ENCODE measurements at regions of chr4 and their contacts with region 1.

Region 1: DNA sequence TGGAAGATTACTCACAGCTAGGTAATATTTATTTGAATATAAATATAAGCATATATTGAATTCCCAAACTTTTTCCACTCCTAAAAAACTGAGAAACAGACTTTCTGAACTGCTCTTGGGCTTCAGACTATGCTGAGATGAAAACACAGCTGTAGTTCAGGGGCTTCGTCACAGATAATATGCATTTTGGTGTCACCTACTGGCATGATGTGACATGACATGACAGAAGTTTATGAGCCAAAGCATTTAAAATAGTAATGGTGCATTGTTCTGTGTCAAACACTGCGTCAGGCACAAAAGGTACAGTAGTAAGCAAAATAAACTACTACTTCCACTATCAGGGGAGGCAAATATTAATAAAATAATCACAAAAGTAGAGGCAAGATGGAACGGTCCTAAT is 171.3 kb downstream of the BTC start:
- DNase-seq: peak; percentile 79
- H3K4me3 ChIP-seq: no peak overlapping the region
- H3K27ac ChIP-seq: peak overlapping the region; percentile 98
- H3K4me1 ChIP-seq: peaks cover 87% of the 10 kb centered on the region
- H3K27me3 ChIP-seq: no peaks in the 10 kb centered on the region
- CTCF ChIP-seq: peak; percentile 39 to 46
- POLR2A ChIP-seq: no peak

Region 2: GRCh38 chr4:73740353-73740778 is 882.7 kb before region 1 on chr4 and contains the start of gene CXCL8:
- CTCF ChIA-PET with region 1: no interaction called
- POLR2A ChIA-PET with region 1: no interaction called
- dilution Hi-C with region 1: no loop called
- intact Hi-C with region 1: loop called (anchors 5 kb)
- DNase-seq: peak; percentile 94
- H3K4me3 ChIP-seq: peak within 1 kb of the TSS in 2 of 3 experiments; percentile 20 to 62
- H3K27ac ChIP-seq: peak within 1 kb of the TSS; percentile 75
- H3K4me1 ChIP-seq: peaks cover 28% of the 10 kb centered on the region
- H3K27me3 ChIP-seq: no peaks in the 10 kb centered on the region
- CTCF ChIP-seq: no peak
- POLR2A ChIP-seq: peak; percentile 73
- total RNA-seq, gene CXCL8: 5.2 and 12.6 TPM in 2 replicates

Region 3: DNA sequence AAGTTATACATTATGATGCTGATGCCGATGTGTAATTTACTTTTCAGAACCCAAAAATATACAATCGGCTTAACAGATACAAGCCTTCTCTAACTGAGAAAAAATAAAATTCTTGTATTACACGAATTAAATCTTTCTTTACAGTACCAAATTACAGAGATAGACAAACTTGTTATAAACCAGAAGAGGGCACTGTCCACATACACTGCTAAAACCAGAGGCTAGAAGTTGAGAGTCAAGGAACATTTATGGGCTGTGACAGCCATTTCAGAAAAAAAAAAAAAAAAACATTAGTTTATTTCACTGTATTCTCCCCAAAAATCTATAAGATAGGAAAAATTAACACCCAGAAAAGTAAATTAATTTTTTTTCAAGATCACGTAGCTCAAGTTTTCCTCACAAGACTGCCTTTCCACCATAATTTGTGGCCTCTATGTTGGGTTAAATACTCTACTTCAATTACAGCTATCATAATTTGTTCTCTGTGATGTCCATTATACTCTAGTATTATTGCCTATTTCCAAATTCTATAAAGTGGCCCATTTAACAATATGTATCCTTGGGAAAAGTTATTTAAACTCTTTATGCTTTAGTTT is 246.1 kb before region 1 on chr4:
- CTCF ChIA-PET with region 1: interaction called, 25 read pairs
- POLR2A ChIA-PET with region 1: no interaction called
- dilution Hi-C with region 1: no loop called
- intact Hi-C with region 1: loop called (anchors 1 kb)
- DNase-seq: peak; percentile 67
- H3K4me3 ChIP-seq: no peak overlapping the region
- H3K27ac ChIP-seq: no peak overlapping the region
- H3K4me1 ChIP-seq: peaks cover 7% of the 10 kb centered on the region
- H3K27me3 ChIP-seq: no peaks in the 10 kb centered on the region
- CTCF ChIP-seq: peak; percentile 31
- POLR2A ChIP-seq: no peak

Region 4: GRCh38 chr4:74451200-74451661 is 171.8 kb before region 1 on chr4:
- CTCF ChIA-PET with region 1: no interaction called
- POLR2A ChIA-PET with region 1: no interaction called
- dilution Hi-C with region 1: no loop called
- intact Hi-C with region 1: loop called (anchors 1 kb)
- DNase-seq: peak; percentile 72
- H3K4me3 ChIP-seq: no peak overlapping the region
- H3K27ac ChIP-seq: peak overlapping the region; percentile 12
- H3K4me1 ChIP-seq: peaks cover 13% of the 10 kb centered on the region
- H3K27me3 ChIP-seq: no peaks in the 10 kb centered on the region
- CTCF ChIP-seq: no peak
- POLR2A ChIP-seq: no peak

Region 5: DNA sequence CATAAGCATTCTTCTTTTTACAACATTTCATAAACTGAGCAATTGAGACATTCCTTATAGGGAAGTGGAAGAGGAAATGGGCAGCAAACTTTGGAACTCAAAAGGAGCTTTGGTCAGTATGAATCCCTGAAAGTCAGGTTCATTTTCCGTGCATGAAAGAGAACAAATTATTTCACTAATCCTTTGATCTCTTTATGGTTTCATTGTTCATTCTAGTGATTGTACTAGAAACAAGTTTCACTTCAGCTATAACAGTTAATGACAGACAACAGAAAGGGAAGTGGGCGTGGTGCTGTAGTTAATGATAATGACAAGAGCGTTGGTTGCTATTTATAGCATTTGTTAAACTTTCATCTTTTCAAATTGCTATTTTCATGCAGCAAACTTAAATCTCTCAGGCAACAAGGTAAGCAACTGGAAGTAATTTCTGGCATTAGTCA is 79.8 kb before region 1 on chr4:
- CTCF ChIA-PET with region 1: interaction called, 44 read pairs
- POLR2A ChIA-PET with region 1: interaction called, 3 read pairs
- dilution Hi-C with region 1: no loop called
- intact Hi-C with region 1: loop called (anchors 2 kb)
- DNase-seq: no peak
- H3K4me3 ChIP-seq: no peak overlapping the region
- H3K27ac ChIP-seq: no peak overlapping the region
- H3K4me1 ChIP-seq: peaks cover 48% of the 10 kb centered on the region
- H3K27me3 ChIP-seq: no peaks in the 10 kb centered on the region
- CTCF ChIP-seq: no peak
- POLR2A ChIP-seq: no peak

Region 6: DNA sequence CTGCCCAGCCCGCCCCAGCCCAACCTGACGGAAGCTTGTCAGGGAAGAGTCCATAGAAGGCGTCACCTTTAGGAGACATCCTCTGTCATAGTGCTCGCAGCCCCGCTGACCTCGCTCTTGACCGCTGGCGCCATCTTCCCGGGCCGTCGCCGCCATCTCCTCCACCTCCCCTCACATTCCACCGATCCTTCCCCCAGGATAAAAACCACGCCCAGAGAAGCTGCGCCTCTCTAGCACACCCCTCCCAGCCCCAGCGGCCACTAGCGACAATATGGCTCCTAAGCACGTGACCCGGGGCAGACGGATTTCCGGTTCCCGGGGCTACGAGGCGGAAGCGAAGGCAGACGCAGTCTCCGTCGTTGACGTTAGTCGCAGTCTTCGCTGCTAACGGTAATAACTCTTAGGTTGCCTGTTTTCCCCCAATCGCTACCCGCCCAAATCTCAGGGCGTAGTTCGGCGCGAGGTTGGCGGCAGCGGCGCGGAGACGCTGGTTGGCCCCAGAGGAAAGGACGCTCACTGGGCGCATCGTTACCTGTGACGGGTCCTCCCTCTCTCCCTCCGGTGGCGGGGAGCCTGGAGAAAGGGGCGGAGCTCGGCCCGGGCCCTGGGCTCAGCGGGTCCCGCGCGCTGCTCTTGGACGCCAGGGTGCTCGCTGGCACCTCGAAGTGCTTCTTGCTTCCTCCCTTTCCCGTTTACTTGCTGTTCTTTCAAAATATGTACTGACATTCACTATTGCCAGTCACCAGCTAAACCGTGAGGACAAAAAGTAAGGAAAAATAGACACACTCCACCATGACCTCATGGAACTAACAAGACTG is 891.3 kb after region 1 on chr4 and contains the starts of genes RCHY1 and THAP6:
- CTCF ChIA-PET with region 1: no interaction called
- POLR2A ChIA-PET with region 1: no interaction called
- dilution Hi-C with region 1: no loop called
- intact Hi-C with region 1: loop called (anchors 10 kb)
- DNase-seq: peak; percentile 92
- H3K4me3 ChIP-seq: peak within 1 kb of the TSS; percentile 71 to 94 (median 81)
- H3K27ac ChIP-seq: peak within 1 kb of the TSS; percentile 72
- H3K4me1 ChIP-seq: peaks cover 35% of the 10 kb centered on the region
- H3K27me3 ChIP-seq: no peaks in the 10 kb centered on the region
- CTCF ChIP-seq: no peak
- POLR2A ChIP-seq: peak; percentile 93
- total RNA-seq, gene RCHY1: 29.1 and 30.9 TPM in 2 replicates
- total RNA-seq, gene THAP6: 6.8 and 8.0 TPM in 2 replicates